B cell (primary cell): ENCODE measurements at regions of chr12 and their contacts with region 1.

Region 1: GRCh38 chr12:122421821-122422729 is at the start of gene CLIP1:
- DNase-seq: peak; percentile 79
- ATAC-seq: peak; percentile 66
- H3K4me3 ChIP-seq: peak within 1 kb of the TSS; percentile 71 to 87 (median 82)
- H3K4me3 Mint-ChIP-seq: peak within 1 kb of the TSS; percentile 90
- H3K27ac ChIP-seq: peak within 1 kb of the TSS; percentile 73 to 78
- H3K27ac Mint-ChIP-seq: peak within 1 kb of the TSS; percentile 89
- H3K4me1 ChIP-seq: peaks cover 26 to 40% of the 10 kb centered on the region in 2 donors
- H3K4me1 Mint-ChIP-seq: peaks cover 40% of the 10 kb centered on the region
- H3K27me3 ChIP-seq: no peaks in the 10 kb centered on the region
- H3K27me3 Mint-ChIP-seq: no peaks in the 10 kb centered on the region
- CTCF ChIP-seq: peak; percentile 64
- total RNA-seq, gene CLIP1: 62.4 and 64.9 TPM in 2 replicates

Region 2: DNA sequence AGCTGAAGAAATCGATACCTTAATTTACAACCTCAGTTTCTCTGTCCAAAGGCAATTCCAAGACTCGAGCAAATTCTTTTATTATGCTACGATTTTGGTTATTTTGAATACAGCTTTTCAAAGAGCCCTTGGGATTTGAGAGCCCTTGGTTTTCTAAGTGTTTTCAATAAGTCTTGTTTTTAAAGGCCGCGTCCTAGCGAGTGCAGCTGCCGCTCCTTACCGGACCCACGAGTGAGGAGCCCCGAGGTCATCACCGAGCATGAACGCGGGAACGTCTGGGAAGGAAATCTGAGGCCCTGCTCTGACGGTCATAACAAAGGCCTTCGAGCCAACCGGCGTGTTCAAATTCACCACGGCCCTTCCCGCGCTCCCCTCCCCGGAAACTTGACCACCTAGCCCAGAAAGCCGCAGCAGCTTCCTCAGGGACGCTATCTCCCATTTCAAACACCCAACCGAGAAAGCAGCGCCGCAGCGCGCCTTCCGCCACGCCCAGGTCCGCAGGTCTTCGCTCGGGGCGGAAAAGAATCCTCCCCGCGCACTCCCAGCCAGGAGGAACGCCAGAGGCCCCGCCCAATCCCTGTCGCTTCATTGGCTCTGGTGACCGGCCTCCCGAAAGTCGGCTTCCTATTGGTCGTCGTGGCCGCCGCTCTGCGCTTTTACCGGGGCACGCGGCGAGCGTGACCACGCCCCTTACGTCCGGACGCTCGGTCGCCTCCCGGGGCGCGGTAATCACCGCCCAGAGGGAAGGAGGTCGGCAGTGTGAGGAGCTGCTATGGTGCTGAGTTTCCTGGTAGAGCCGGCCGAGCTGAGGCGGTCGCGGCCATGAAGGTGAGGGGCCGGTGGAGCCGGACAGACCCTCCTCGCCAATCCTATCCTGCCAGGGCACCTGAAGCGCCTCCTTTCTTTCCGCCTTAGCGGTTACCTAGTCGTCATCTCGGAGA is 1022.4 kb before region 1 on chr12 and contains the start of gene RNF34:
- CTCF ChIA-PET with region 1: no interaction called
- POLR2A ChIA-PET with region 1: no interaction called
- intact Hi-C with region 1: loop called (anchors 5 kb)
- DNase-seq: peak; percentile 99
- ATAC-seq: peak; percentile 94
- H3K4me3 ChIP-seq: peak within 1 kb of the TSS; percentile 79 to 96 (median 82)
- H3K4me3 Mint-ChIP-seq: peak within 1 kb of the TSS; percentile 93
- H3K27ac ChIP-seq: peak within 1 kb of the TSS; percentile 76 to 89
- H3K27ac Mint-ChIP-seq: peak within 1 kb of the TSS; percentile 99
- H3K4me1 ChIP-seq: peaks cover 24 to 25% of the 10 kb centered on the region in 2 donors
- H3K4me1 Mint-ChIP-seq: peaks cover 31% of the 10 kb centered on the region
- H3K27me3 ChIP-seq: no peaks in the 10 kb centered on the region
- H3K27me3 Mint-ChIP-seq: no peaks in the 10 kb centered on the region
- CTCF ChIP-seq: no peak
- total RNA-seq, gene RNF34: 79.6 and 86.7 TPM in 2 replicates

Region 3: DNA sequence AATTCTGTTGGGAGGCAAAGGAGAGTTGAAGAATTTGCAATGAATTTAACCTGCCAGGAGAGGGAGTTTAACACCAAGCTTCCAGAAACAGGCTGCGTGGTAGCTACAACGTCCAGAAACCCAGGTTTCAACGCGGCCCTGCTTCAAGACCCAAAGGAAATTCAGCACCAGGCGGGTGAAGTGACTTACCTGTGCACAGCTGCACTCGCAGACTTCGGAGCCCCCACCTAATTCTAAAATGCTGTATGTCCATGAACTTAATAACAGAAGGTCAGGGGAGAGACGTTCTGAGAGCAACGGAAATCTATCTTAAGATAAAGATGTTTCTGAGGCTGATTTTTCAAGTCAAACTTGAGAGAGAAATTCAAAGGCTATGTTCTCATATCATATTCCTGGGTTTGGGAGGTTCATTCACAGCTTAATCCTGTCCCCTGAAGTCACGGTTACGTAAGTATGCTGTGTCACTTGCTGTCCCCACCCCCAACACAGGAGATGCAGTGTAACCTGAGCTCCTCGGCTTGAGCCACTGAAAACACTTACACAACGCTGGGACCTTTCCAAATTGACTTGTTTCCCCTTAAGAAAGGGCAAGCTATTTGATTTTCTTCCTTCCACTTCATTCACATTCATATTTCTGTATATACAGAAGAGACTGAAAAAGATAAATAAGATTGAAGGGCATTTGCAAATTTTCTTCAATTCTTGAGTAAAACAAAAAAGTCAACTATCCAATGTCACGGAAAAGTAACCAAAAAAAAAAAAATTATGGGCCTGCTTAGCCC is 22.3 kb before region 1 on chr12:
- CTCF ChIA-PET with region 1: interaction called, 59 read pairs
- POLR2A ChIA-PET with region 1: interaction called, 8 read pairs
- intact Hi-C with region 1: loop called (anchors 1 kb)
- DNase-seq: peak; percentile 77
- ATAC-seq: peak; percentile 66
- H3K4me3 ChIP-seq: peak overlapping the region in 1 of 5 experiments; percentile 6
- H3K4me3 Mint-ChIP-seq: peak overlapping the region; percentile 75
- H3K27ac ChIP-seq: peak overlapping the region in 1 of 2 donors; percentile 38
- H3K27ac Mint-ChIP-seq: peak overlapping the region; percentile 73
- H3K4me1 ChIP-seq: peaks cover 23 to 31% of the 10 kb centered on the region in 2 donors
- H3K4me1 Mint-ChIP-seq: peaks cover 31% of the 10 kb centered on the region
- H3K27me3 ChIP-seq: no peaks in the 10 kb centered on the region
- H3K27me3 Mint-ChIP-seq: no peaks in the 10 kb centered on the region
- CTCF ChIP-seq: peak; percentile 87

Region 4: DNA sequence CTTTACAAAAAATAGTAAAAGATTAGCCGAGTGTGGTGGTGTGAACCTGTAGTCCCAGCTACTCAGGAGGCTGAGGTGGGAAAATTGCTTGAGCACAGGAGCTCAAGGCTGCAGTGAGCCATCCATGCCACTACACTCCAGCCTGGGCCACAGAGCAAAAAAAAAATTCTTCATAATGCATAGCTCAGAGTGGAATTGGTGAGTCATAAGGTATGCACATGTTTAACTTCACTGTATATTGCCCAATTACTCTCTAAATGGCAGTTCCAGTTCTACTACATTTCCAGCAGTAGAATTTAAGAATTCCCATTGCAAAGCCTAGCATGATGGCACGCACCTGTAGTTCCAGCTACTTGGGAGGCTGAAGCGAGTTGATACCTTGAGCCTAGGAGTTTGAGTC is 27.3 kb after region 1 on chr12:
- CTCF ChIA-PET with region 1: interaction called, 3 read pairs
- POLR2A ChIA-PET with region 1: no interaction called
- intact Hi-C with region 1: loop called (anchors 2 kb)
- DNase-seq: no peak
- ATAC-seq: no peak
- H3K4me3 ChIP-seq: no peak overlapping the region
- H3K4me3 Mint-ChIP-seq: no peak overlapping the region
- H3K27ac ChIP-seq: no peak overlapping the region
- H3K27ac Mint-ChIP-seq: no peak overlapping the region
- H3K4me1 ChIP-seq: peaks cover 18% of the 10 kb centered on the region in 2 donors
- H3K4me1 Mint-ChIP-seq: peaks cover 16% of the 10 kb centered on the region
- H3K27me3 ChIP-seq: no peaks in the 10 kb centered on the region
- H3K27me3 Mint-ChIP-seq: no peaks in the 10 kb centered on the region
- CTCF ChIP-seq: no peak

Region 5: GRCh38 chr12:123271001-123271729 is 849.1 kb after region 1 on chr12:
- CTCF ChIA-PET with region 1: no interaction called
- POLR2A ChIA-PET with region 1: interaction called, 10 read pairs
- intact Hi-C with region 1: no loop called
- DNase-seq: peak; percentile 81
- ATAC-seq: peak; percentile 74
- H3K4me3 ChIP-seq: peak overlapping the region in 3 of 5 experiments; percentile 52 to 56 (median 54)
- H3K4me3 Mint-ChIP-seq: no peak overlapping the region
- H3K27ac ChIP-seq: no peak overlapping the region
- H3K27ac Mint-ChIP-seq: no peak overlapping the region
- H3K4me1 ChIP-seq: peaks cover 31 to 37% of the 10 kb centered on the region in 2 donors
- H3K4me1 Mint-ChIP-seq: peaks cover 29% of the 10 kb centered on the region
- H3K27me3 ChIP-seq: peaks cover 0 to 6% (median 0%) of the 10 kb centered on the region in 4 experiments
- H3K27me3 Mint-ChIP-seq: no peaks in the 10 kb centered on the region
- CTCF ChIP-seq: peak; percentile 38